Calu3 (cell line): ENCODE measurements at regions of chr1 and their contacts with region 1.

Region 1: DNA sequence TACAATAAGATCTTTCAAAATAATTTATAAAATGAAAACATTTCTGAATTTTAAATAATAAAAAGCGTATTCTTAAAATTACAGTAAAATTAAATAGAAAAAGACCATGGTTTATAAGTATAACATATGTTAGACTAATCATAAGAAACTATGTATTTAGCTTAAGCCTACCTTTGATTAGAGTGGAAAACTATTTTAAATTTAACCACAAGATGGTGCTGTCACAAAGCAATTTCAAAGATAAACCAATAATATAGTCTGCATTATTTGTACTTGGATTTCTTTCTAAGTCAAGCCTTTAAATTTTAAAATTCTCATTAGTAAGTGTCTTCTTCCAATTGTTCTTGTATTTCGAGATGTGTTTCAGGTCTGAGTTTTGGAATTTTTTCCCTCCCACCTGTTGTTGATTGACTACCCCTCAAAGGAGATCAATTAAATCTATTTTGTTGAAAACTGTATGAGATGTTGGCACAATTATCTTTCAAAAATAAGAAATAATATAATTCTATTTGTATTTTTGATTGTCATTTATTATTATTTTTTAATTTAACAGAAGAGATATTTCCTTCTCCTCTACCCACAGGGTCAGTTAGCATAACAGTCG is 459.8 kb downstream of the KCNT2 start:
- DNase-seq: no peak
- H3K4me3 Mint-ChIP-seq: no peak overlapping the region
- H3K27ac Mint-ChIP-seq: no peak overlapping the region
- H3K4me1 Mint-ChIP-seq: peaks cover 8% of the 10 kb centered on the region
- H3K27me3 Mint-ChIP-seq: no peaks in the 10 kb centered on the region
- CTCF ChIP-seq: peak; percentile 43

Region 2: DNA sequence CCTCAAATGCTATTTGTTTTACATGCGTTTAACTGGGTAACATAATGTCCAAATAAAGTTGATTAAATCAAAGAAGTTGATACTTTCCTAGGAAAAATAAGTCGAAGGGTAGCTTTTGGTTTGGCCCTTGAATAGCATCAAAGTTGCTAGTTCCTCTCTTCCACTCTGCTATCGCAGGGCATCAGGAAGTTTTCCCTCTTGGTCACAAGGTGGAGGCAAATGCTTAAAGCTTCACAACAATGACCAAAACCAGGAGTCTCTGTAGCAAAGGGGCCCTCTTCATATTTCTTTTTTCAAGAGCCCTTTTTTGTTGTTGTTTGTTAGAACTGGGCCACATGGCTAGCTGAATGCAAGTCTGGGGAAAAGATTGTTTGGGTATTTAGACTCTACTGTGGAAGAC is 208.6 kb before region 1 on chr1:
- CTCF ChIA-PET with region 1: no interaction called
- intact Hi-C with region 1: loop called (anchors 5 kb)
- DNase-seq: no peak
- H3K4me3 Mint-ChIP-seq: no peak overlapping the region
- H3K27ac Mint-ChIP-seq: no peak overlapping the region
- H3K4me1 Mint-ChIP-seq: no peaks in the 10 kb centered on the region
- H3K27me3 Mint-ChIP-seq: no peaks in the 10 kb centered on the region
- CTCF ChIP-seq: peak; percentile 22

Region 3: GRCh38 chr1:196128835-196129234 is 19.6 kb before region 1 on chr1:
- CTCF ChIA-PET with region 1: no interaction called
- intact Hi-C with region 1: no loop called
- DNase-seq: no peak
- H3K4me3 Mint-ChIP-seq: no peak overlapping the region
- H3K27ac Mint-ChIP-seq: no peak overlapping the region
- H3K4me1 Mint-ChIP-seq: no peaks in the 10 kb centered on the region
- H3K27me3 Mint-ChIP-seq: no peaks in the 10 kb centered on the region
- CTCF ChIP-seq: no peak

Region 4: DNA sequence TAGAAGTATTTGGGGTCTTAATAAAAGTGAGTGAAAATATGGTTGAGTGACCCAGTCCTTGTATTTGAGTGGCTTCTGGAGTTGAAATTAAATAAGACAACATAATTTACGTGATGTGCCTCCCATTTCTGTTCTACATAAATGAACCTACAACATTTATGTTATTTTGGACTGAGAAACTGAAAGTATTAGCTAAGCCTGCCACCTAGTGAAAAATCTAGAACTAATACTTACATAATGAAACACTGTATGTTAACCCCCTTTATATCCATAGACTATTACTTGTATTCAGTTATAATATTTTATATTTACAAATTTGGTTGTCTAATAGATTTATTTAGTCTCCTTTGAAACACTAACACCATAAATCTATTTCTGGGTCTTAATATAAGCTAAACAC is 160.9 kb after region 1 on chr1:
- CTCF ChIA-PET with region 1: interaction called, 25 read pairs
- intact Hi-C with region 1: loop called (anchors 1 kb)
- DNase-seq: no peak
- H3K4me3 Mint-ChIP-seq: no peak overlapping the region
- H3K27ac Mint-ChIP-seq: no peak overlapping the region
- H3K4me1 Mint-ChIP-seq: no peaks in the 10 kb centered on the region
- H3K27me3 Mint-ChIP-seq: no peaks in the 10 kb centered on the region
- CTCF ChIP-seq: no peak

Region 5: GRCh38 chr1:196660852-196661251 is 512.4 kb after region 1 on chr1:
- CTCF ChIA-PET with region 1: interaction called, 11 read pairs
- intact Hi-C with region 1: loop called (anchors 2 kb)
- DNase-seq: no peak
- H3K4me3 Mint-ChIP-seq: no peak overlapping the region
- H3K27ac Mint-ChIP-seq: no peak overlapping the region
- H3K4me1 Mint-ChIP-seq: no peaks in the 10 kb centered on the region
- H3K27me3 Mint-ChIP-seq: no peaks in the 10 kb centered on the region
- CTCF ChIP-seq: peak; percentile 31